CD4-positive, alpha-beta memory T cell (primary cell): ENCODE measurements at regions of chr22 and their contacts with region 1.

Region 1: GRCh38 chr22:28791841-28792490 is 8.4 kb downstream of the XBP1 start:
- DNase-seq: no peak
- H3K4me3 ChIP-seq: no peak overlapping the region
- H3K4me3 Mint-ChIP-seq: peak overlapping the region in 5 of 8 donors; percentile 22 to 82 (median 60)
- H3K27ac ChIP-seq: no peak overlapping the region
- H3K27ac Mint-ChIP-seq: peak overlapping the region; percentile 23 to 89 (median 47)
- H3K4me1 ChIP-seq: peaks cover 65% of the 10 kb centered on the region
- H3K4me1 Mint-ChIP-seq: peaks cover 44 to 72% (median 61%) of the 10 kb centered on the region in 4 donors
- H3K27me3 ChIP-seq: no peaks in the 10 kb centered on the region
- H3K27me3 Mint-ChIP-seq: no peaks in the 10 kb centered on the region

Region 2: GRCh38 chr22:28600546-28601143 is 191.3 kb before region 1 on chr22:
- CTCF ChIA-PET with region 1: interaction called, 22 read pairs
- POLR2A ChIA-PET with region 1: interaction called, 6 read pairs
- intact Hi-C with region 1: no loop called
- DNase-seq: peak; percentile 31 to 63 (median 59)
- H3K4me3 ChIP-seq: no peak overlapping the region
- H3K4me3 Mint-ChIP-seq: no peak overlapping the region
- H3K27ac ChIP-seq: no peak overlapping the region
- H3K27ac Mint-ChIP-seq: no peak overlapping the region
- H3K4me1 ChIP-seq: no peaks in the 10 kb centered on the region
- H3K4me1 Mint-ChIP-seq: no peaks in the 10 kb centered on the region
- H3K27me3 ChIP-seq: peaks cover 13% of the 10 kb centered on the region
- H3K27me3 Mint-ChIP-seq: peaks cover 6 to 14% of the 10 kb centered on the region in 2 donors

Region 3: DNA sequence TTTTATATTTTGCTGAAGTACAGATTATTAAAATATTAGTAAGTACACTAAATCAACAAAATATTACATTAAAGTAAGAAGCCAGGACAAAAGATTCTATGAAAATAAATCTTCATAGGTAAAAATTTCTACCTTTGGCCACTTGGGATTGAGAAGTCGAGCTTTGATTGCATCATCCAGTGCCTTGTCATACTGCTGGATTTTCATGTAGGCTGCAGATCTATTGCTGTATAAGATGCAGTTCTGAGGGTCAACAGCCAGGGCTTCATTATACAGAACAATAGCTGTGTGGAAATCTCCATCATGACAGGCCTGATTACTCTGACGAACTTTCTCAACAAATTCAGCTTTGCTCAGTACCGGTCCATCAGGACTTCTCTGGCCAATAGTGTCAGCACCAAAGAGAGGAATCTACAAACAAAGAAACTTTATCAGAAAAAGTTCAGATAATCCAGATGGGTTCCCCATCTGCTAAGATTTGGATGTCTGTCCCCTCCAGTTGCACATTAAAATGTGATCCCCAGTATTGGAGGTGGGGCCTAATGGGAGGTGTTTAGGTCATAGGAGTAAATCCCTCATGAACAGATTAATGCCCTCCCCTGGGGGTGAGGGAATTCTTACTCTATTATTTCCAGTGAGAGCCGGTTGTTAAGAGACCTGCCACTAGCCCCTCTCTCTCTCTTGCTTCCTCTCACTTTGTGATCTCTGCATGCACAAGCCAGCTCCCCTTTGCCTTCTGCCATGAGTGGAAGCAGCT is 162.4 kb before region 1 on chr22:
- CTCF ChIA-PET with region 1: no interaction called
- POLR2A ChIA-PET with region 1: no interaction called
- intact Hi-C with region 1: no loop called
- DNase-seq: no peak
- H3K4me3 ChIP-seq: no peak overlapping the region
- H3K4me3 Mint-ChIP-seq: no peak overlapping the region
- H3K27ac ChIP-seq: no peak overlapping the region
- H3K27ac Mint-ChIP-seq: no peak overlapping the region
- H3K4me1 ChIP-seq: no peaks in the 10 kb centered on the region
- H3K4me1 Mint-ChIP-seq: no peaks in the 10 kb centered on the region
- H3K27me3 ChIP-seq: no peaks in the 10 kb centered on the region
- H3K27me3 Mint-ChIP-seq: peaks cover 13 to 17% of the 10 kb centered on the region in 2 donors

Region 4: DNA sequence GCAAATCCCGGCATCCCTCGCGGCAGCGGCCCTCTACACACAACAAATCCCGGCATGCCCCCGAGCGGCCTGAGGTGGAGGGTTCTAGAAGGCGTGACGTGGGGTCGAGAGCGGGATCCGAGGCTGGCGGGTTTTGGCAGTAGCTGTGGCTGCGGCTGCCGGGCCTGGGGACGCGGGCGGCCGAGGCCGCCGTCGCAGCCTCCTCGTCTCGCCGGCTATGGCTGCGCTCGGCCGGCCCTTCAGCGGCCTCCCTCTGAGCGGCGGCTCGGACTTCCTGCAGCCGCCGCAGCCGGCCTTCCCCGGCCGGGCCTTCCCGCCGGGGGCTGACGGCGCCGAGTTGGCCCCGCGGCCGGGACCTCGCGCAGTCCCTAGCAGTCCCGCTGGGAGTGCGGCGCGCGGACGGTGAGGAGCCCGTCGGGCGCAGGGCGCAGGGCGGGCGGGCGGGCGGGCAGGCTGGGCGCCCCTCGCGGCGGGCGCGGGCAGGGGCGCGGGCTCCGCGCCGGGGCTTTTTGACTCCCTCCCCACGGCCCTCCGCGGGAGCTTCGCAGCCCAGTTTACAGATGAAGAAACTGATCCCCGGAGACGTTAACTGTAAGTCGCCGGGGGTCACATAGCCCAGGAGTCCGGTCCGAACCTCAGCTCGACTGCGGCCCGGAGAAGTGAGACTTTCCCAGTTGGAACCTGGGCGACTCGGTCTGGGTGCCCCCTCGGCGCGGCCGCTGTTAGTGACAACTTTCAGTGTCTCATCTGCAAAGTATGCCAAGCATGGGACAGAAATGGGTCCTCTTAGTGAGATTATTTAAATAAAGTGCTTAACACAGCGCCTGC is 19.1 kb before region 1 on chr22 and contains the start of gene CCDC117:
- CTCF ChIA-PET with region 1: interaction called, 16 read pairs
- POLR2A ChIA-PET with region 1: interaction called, 9 read pairs
- intact Hi-C with region 1: no loop called
- DNase-seq: peak; percentile 87 to 96 (median 88)
- H3K4me3 ChIP-seq: peak within 1 kb of the TSS; percentile 72 to 86
- H3K4me3 Mint-ChIP-seq: peak within 1 kb of the TSS; percentile 93 to 99 (median 96)
- H3K27ac ChIP-seq: peak within 1 kb of the TSS; percentile 84
- H3K27ac Mint-ChIP-seq: peak within 1 kb of the TSS; percentile 89 to 97 (median 94)
- H3K4me1 ChIP-seq: peaks cover 35% of the 10 kb centered on the region
- H3K4me1 Mint-ChIP-seq: peaks cover 17 to 36% (median 25%) of the 10 kb centered on the region in 4 donors
- H3K27me3 ChIP-seq: no peaks in the 10 kb centered on the region
- H3K27me3 Mint-ChIP-seq: no peaks in the 10 kb centered on the region
- total RNA-seq, gene CCDC117: 20.3 to 20.6 TPM

Region 5: GRCh38 chr22:28810821-28811491 is 19.0 kb after region 1 on chr22:
- CTCF ChIA-PET with region 1: interaction called, 39 read pairs
- POLR2A ChIA-PET with region 1: interaction called, 236 read pairs
- intact Hi-C with region 1: no loop called
- DNase-seq: peak; percentile 49 to 63 (median 60)
- H3K4me3 ChIP-seq: peak overlapping the region in 1 of 2 donors; percentile 29
- H3K4me3 Mint-ChIP-seq: peak overlapping the region; percentile 72 to 88 (median 86)
- H3K27ac ChIP-seq: peak overlapping the region; percentile 31
- H3K27ac Mint-ChIP-seq: peak overlapping the region; percentile 83 to 94 (median 90)
- H3K4me1 ChIP-seq: peaks cover 77% of the 10 kb centered on the region
- H3K4me1 Mint-ChIP-seq: peaks cover 46 to 94% (median 70%) of the 10 kb centered on the region in 4 donors
- H3K27me3 ChIP-seq: no peaks in the 10 kb centered on the region
- H3K27me3 Mint-ChIP-seq: no peaks in the 10 kb centered on the region

Region 6: GRCh38 chr22:28817919-28818909 is 26.2 kb after region 1 on chr22:
- CTCF ChIA-PET with region 1: interaction called, 39 read pairs
- POLR2A ChIA-PET with region 1: interaction called, 236 read pairs
- intact Hi-C with region 1: no loop called
- DNase-seq: peak in 1 of 5 donors; percentile 20
- H3K4me3 ChIP-seq: no peak overlapping the region
- H3K4me3 Mint-ChIP-seq: peak overlapping the region; percentile 20 to 78 (median 70)
- H3K27ac ChIP-seq: no peak overlapping the region
- H3K27ac Mint-ChIP-seq: peak overlapping the region; percentile 23 to 94 (median 74)
- H3K4me1 ChIP-seq: peaks cover 70% of the 10 kb centered on the region
- H3K4me1 Mint-ChIP-seq: peaks cover 45 to 85% (median 70%) of the 10 kb centered on the region in 4 donors
- H3K27me3 ChIP-seq: no peaks in the 10 kb centered on the region
- H3K27me3 Mint-ChIP-seq: no peaks in the 10 kb centered on the region

Region 7: DNA sequence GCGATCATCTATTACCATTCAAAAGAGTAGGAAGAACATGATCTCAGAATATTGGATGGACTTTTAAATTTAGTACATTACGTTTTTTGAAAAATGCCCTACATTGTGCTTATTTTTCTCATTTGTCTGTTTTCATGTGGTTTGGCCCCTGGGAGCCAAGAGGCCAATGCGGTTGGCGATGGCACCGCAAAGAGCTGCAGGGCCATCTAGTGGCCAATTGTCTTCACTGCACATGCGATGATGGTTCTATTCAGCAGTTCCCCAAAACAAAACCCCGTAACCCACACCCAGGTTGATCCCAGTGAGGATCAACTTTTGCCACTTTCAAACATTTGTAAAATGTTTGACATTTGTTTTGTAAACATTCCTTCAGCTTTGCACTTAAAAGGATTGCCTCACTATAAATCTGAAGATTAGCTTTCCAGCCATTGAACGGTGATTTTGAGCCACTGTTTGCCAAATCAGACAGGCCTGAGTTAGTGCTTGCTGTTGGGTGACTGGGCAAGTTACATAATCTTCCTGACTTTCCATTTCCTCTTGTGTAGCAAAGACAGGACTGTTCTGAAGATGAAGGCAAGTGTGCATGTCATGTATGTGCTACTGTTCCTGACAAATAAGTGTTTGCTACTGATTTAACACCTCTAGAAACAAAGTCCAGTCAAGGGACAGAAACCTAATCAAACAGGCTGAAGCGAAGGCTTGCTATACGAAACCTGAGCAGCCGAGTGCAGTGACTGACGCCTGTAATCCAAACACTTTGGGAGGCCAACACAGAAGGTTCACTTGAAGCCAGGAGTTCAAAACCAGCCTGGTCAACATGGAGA is 37.6 kb after region 1 on chr22:
- CTCF ChIA-PET with region 1: interaction called, 166 read pairs
- POLR2A ChIA-PET with region 1: interaction called, 35 read pairs
- intact Hi-C with region 1: loop called (anchors 1 kb)
- DNase-seq: peak; percentile 69 to 74 (median 71)
- H3K4me3 ChIP-seq: no peak overlapping the region
- H3K4me3 Mint-ChIP-seq: peak overlapping the region in 6 of 8 donors; percentile 33 to 78 (median 62)
- H3K27ac ChIP-seq: no peak overlapping the region
- H3K27ac Mint-ChIP-seq: peak overlapping the region in 5 of 7 donors; percentile 31 to 88 (median 75)
- H3K4me1 ChIP-seq: peaks cover 14% of the 10 kb centered on the region
- H3K4me1 Mint-ChIP-seq: peaks cover 11 to 43% (median 20%) of the 10 kb centered on the region in 4 donors
- H3K27me3 ChIP-seq: no peaks in the 10 kb centered on the region
- H3K27me3 Mint-ChIP-seq: no peaks in the 10 kb centered on the region

Region 8: GRCh38 chr22:29040385-29041275 is 248.7 kb after region 1 on chr22:
- CTCF ChIA-PET with region 1: interaction called, 16 read pairs
- POLR2A ChIA-PET with region 1: interaction called, 4 read pairs
- intact Hi-C with region 1: loop called (anchors 1 kb)
- DNase-seq: peak; percentile 62 to 68 (median 67)
- H3K4me3 ChIP-seq: no peak overlapping the region
- H3K4me3 Mint-ChIP-seq: no peak overlapping the region
- H3K27ac ChIP-seq: no peak overlapping the region
- H3K27ac Mint-ChIP-seq: no peak overlapping the region
- H3K4me1 ChIP-seq: no peaks in the 10 kb centered on the region
- H3K4me1 Mint-ChIP-seq: peaks cover 0 to 3% (median 0%) of the 10 kb centered on the region in 4 donors
- H3K27me3 ChIP-seq: no peaks in the 10 kb centered on the region
- H3K27me3 Mint-ChIP-seq: peaks cover 0 to 3% of the 10 kb centered on the region in 2 donors